ENCODE measurements at regions of chr21 and their contacts with region 1.

Region 1: DNA sequence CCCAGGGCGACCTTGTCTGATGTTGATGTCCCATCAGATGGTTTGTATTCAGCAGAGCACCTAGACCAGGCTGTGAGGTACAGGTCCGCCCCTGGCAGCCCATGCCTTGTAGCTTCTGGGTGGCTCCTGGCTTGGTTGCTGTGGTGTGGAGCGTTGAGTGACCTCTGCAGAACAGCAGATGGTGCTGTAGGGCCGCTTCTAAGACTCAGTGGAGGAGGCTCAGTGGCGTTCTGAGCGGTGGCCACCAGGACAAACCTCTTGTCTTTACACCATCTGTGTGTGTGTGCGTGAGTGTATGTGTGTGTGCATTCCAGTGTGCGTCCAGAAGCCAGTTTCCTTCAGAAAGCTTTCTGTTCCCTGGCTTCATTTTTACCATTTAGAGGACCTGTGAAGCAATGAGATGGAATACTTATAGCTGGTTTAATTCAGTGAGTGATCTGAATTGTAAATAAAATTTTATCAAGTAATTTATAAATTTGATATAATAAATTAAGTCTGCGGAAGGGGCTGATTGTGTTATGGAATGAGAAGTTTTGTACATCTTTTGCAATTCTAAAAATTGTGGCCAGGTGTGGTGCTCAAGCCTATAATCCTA is 66.1 kb downstream of the ADARB1 start:
- DNase-seq: peak; percentile 75
- ATAC-seq: peak; percentile 83

Region 2: DNA sequence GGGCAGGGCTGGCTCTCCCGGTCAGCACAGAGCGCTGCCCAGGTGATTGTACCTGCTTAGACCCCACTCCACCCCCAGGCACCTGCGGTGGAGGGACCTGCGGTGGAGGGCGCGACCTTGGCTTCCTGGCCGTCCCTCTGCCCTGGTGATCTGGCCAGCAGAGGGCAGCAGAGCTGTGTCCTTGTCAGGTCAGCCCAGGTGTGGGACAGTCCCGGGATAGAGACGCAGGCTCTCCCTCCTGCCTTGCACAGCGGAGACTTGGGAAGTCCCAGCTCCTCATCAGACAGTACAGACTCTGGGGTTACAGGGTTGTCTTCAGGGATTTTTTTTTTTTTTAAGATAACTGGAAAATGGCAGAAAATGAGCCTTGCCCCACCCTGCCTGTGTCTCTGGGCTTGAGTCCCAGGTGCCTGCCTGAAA is 190.7 kb before region 1 on chr21:
- intact Hi-C with region 1: loop called (anchors 5 kb)
- DNase-seq: peak; percentile 96
- ATAC-seq: peak; percentile 62

Region 3: DNA sequence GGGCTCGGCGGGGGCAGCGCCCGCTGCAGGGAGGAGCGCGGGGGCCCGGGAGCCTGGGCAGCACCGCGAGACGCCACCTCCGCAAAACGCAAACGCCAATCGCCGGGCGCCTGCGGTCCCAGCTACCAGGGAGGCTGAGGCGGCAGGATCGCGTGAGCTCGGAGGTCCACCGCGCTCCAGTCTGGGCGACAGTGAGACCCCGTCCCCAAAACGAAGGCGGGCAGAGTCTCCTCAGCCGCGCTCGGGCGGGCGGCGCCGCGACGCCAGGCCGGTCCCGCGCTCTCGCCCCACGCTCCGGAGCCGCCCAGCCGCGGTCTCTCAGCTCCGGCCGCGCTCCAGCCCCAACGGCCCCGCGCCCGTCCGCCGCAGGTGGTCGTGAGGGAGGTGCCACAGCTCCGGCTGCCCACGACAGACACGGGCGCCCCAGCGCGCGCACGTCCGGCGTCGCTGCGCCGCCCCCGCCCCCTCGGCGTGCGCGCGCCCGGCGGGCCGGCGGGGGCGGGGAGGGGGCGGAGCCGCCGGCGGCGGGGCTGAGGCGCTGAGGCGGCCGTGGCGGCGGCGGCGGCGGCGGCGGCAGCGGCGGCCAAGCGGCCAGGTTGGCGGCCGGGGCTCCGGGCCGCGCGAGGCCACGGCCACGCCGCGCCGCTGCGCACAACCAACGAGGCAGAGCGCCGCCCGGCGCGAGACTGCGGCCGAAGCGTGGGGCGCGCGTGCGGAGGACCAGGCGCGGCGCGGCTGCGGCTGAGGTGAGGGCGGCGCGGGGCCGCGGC is 66.2 kb before region 1 on chr21 and contains the start of gene ADARB1:
- intact Hi-C with region 1: loop called (anchors 10 kb)
- DNase-seq: peak; percentile 85
- ATAC-seq: peak; percentile 83
- total RNA-seq, gene ADARB1: 13.6 TPM

Region 4: GRCh38 chr21:45439161-45439872 is 298.9 kb after region 1 on chr21:
- intact Hi-C with region 1: loop called (anchors 10 kb)
- DNase-seq: peak; percentile 92
- ATAC-seq: peak; percentile 88